Transverse colon (tissue), 4 donors: ENCODE measurements at regions of chr15 and their contacts with region 1.

Region 1: DNA sequence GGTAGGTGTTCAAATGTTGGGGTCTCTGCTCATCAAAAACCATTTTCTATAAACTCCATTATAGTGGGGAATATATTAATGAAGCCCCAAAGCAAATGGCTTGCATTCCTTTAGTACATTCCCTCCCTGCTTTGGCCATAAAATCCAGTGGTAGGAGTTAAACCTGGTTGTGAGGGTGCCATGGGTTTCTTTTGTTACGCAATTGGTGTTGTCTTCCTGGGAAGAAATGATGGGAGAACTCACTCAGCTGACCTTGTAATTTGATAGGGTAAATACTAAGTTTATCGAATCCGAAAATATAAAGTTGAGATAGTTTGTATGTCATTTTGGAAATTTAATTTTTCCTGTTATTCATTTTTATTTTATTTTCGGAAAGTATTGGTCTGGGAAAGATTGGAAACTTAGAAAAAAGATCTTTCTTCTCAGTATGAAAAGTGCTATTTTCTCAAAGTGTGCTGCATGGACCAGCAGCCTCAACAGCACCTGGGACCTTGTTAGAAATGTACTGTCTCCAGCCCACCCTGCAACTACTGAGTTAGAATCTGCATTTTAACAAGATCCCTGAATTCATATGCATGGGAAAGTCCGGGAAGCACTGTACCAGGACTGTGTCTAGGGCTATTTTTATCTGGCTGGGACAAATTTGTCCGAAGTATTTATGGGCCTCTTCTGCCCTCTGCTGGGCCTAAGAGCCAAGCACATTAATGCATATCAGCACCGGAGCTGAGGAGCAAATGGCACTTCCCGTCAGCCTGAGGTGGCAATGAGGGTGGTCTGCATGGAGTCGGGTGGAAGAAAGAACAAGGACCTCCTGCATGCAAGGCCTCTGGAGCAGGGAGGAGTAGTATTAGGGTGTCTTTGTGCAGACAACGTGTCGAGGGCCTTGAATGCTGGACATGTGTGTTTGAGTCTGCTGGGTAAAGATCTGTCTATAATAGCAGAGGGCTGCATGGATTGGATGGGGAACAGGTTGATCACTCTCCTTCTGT is 54.7 kb downstream of the FAM81A start:
- DNase-seq: peak; percentile 64
- H3K4me3 ChIP-seq: no peak overlapping the region
- H3K27ac ChIP-seq: no peak overlapping the region
- H3K4me1 ChIP-seq: peaks cover 0 to 5% (median 1%) of the 10 kb centered on the region in 4 donors
- H3K27me3 ChIP-seq: no peaks in the 10 kb centered on the region
- CTCF ChIP-seq: peak; percentile 75 to 86 (median 79)
- EP300 ChIP-seq: no peak
- POLR2A ChIP-seq: no peak

Region 2: GRCh38 chr15:58981808-58982475 is 510.7 kb before region 1 on chr15:
- in situ Hi-C with region 1: loop called (anchors 10 kb)
- intact Hi-C with region 1: loop called (anchors 2 kb)
- DNase-seq: no peak
- H3K4me3 ChIP-seq: no peak overlapping the region
- H3K27ac ChIP-seq: no peak overlapping the region
- H3K4me1 ChIP-seq: peaks cover 0 to 25% (median 6%) of the 10 kb centered on the region in 4 donors
- H3K27me3 ChIP-seq: no peaks in the 10 kb centered on the region
- CTCF ChIP-seq: no peak
- EP300 ChIP-seq: no peak
- POLR2A ChIP-seq: no peak

Region 3: GRCh38 chr15:59160880-59161593 is 331.6 kb before region 1 on chr15:
- in situ Hi-C with region 1: loop called in 2 of 4 experiments (anchors 10 to 25 kb)
- intact Hi-C with region 1: no loop called
- DNase-seq: no peak
- H3K4me3 ChIP-seq: no peak overlapping the region
- H3K27ac ChIP-seq: no peak overlapping the region
- H3K4me1 ChIP-seq: no peaks in the 10 kb centered on the region
- H3K27me3 ChIP-seq: no peaks in the 10 kb centered on the region
- CTCF ChIP-seq: peak in 2 of 5 experiments; percentile 16 to 23
- EP300 ChIP-seq: no peak
- POLR2A ChIP-seq: no peak

Region 4: GRCh38 chr15:59174835-59175831 is 317.6 kb before region 1 on chr15:
- in situ Hi-C with region 1: loop called in 1 of 4 experiments (anchors 25 kb)
- intact Hi-C with region 1: no loop called
- DNase-seq: peak; percentile 63
- H3K4me3 ChIP-seq: no peak overlapping the region
- H3K27ac ChIP-seq: peak overlapping the region; percentile 50 to 67 (median 60)
- H3K4me1 ChIP-seq: peaks cover 3 to 22% (median 10%) of the 10 kb centered on the region in 4 donors
- H3K27me3 ChIP-seq: no peaks in the 10 kb centered on the region
- CTCF ChIP-seq: peak; percentile 46 to 73 (median 54)
- EP300 ChIP-seq: no peak
- POLR2A ChIP-seq: no peak

Region 5: GRCh38 chr15:59247364-59247763 is 245.3 kb before region 1 on chr15:
- in situ Hi-C with region 1: loop called in 3 of 4 experiments (anchors 10 kb)
- intact Hi-C with region 1: no loop called
- DNase-seq: peak; percentile 74
- H3K4me3 ChIP-seq: no peak overlapping the region
- H3K27ac ChIP-seq: peak overlapping the region in 2 of 4 donors; percentile 11 to 38
- H3K4me1 ChIP-seq: peaks cover 3 to 29% (median 13%) of the 10 kb centered on the region in 4 donors
- H3K27me3 ChIP-seq: no peaks in the 10 kb centered on the region
- CTCF ChIP-seq: peak; percentile 48 to 75 (median 58)
- EP300 ChIP-seq: no peak
- POLR2A ChIP-seq: no peak